ENCODE measurements at regions of chr14 and their contacts with region 1.

Region 1: DNA sequence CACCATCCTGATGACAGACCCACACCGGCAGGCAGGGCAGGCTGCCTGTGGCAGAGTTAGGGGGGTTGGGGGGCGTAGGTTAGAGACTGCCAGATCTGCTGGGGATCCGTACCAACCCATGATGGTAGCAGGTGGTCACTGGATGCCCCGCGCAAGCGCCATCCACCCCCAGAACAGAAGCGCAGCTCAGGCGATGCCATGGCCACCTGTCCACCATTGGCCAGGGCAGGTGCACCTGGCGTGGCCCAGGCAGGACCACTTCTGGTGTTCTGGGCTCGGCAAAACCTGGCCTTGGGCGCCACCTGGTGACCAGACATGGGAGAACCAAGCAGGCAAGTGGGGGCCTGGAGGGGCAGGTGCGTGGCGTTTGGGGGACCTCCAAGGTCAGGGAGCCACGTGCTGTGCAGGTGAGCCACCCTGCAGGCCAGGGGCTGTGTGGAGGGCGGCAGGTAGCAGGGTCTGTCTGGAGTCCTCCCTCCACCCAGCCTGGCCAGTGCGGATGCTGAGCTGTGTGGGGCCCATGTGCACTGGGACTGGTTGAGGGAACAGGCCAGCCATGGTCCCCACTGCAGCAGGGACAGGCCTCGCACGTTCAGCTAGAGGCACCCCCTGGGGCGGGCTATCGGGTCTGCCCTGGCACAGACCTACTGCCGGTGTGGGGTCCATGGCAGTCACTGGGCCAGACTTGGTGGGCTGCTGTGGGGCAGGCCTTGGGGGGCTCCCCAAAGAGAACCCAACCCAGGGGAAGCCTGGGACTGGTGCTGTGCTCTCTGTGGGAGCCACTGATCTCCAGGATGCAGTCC is 15.6 kb downstream of the BAG5 start:
- DNase-seq: peak; percentile 94
- H3K4me3 ChIP-seq: peak overlapping the region in 1 of 2 experiments; percentile 50; a peak in 1 of 4 replicates
- H3K27ac ChIP-seq: no peak overlapping the region
- H3K4me1 ChIP-seq: peaks cover 7 to 25% of the 10 kb centered on the region in 2 experiments; a peak in 3 of 4 replicates
- H3K27me3 ChIP-seq: no peaks in the 10 kb centered on the region
- CTCF ChIP-seq: peak; percentile 91
- EP300 ChIP-seq: no peak
- RAD21 ChIP-seq: peak; percentile 91

Region 2: GRCh38 chr14:103463149-103463548 is 83.7 kb before region 1 on chr14:
- CTCF ChIA-PET with region 1: no interaction called
- POLR2A ChIA-PET with region 1: no interaction called
- DNase-seq: no peak
- H3K4me3 ChIP-seq: no peak overlapping the region
- H3K27ac ChIP-seq: no peak overlapping the region
- H3K4me1 ChIP-seq: no peaks in the 10 kb centered on the region
- H3K27me3 ChIP-seq: no peaks in the 10 kb centered on the region
- CTCF ChIP-seq: no peak
- EP300 ChIP-seq: no peak
- RAD21 ChIP-seq: no peak

Region 3: DNA sequence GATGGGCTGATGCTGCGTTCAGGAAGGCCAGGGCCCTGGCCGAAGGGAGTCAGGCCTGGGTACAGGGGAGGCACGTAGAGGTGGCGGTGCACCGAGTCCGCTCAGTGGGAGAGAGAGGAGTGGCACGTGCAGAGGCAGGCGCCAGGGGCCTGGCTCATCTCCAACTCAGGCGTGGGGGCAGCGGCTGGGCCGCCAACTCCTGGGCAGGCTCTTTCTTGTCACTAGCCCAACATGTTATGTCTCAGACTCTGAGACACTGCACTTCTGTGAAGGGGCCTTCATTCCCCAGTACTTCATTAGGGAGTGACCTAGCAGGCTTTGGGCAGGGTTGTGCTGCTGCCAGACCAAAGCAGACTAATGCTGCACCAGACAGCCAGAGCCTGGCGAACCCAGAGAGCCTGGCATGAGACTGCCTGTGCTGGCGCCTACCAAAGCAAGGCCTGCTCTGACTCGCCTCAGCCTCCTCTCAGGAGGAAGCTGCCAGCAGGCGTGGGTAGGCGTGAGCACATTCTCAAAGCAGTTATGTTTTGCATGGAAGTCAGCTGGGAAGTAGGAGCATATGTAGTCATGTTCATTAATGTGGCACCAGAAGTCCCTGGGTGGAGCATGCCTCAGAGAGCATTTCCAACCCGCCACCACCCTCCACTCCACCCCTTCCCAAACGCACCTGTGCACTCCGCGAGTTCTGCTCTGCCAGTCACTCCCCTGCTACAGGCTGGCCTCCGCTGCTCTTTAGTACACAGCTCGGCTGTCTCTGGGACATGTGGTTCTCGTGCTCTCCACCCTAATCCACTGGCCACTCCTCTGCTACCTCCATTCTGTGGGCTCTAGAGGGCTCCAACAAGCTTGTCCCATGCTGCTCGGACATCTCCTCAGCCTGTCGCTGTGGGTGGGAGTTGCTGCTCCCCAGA is 33.9 kb before region 1 on chr14:
- CTCF ChIA-PET with region 1: interaction called, 194 read pairs
- POLR2A ChIA-PET with region 1: no interaction called
- DNase-seq: no peak
- H3K4me3 ChIP-seq: no peak overlapping the region
- H3K27ac ChIP-seq: peak overlapping the region in 1 of 2 experiments; percentile 34; a peak in 1 of 4 replicates
- H3K4me1 ChIP-seq: peaks cover 3 to 10% of the 10 kb centered on the region in 2 experiments; a peak in 1 of 4 replicates
- H3K27me3 ChIP-seq: no peaks in the 10 kb centered on the region
- CTCF ChIP-seq: no peak
- EP300 ChIP-seq: no peak
- RAD21 ChIP-seq: no peak

Region 4: DNA sequence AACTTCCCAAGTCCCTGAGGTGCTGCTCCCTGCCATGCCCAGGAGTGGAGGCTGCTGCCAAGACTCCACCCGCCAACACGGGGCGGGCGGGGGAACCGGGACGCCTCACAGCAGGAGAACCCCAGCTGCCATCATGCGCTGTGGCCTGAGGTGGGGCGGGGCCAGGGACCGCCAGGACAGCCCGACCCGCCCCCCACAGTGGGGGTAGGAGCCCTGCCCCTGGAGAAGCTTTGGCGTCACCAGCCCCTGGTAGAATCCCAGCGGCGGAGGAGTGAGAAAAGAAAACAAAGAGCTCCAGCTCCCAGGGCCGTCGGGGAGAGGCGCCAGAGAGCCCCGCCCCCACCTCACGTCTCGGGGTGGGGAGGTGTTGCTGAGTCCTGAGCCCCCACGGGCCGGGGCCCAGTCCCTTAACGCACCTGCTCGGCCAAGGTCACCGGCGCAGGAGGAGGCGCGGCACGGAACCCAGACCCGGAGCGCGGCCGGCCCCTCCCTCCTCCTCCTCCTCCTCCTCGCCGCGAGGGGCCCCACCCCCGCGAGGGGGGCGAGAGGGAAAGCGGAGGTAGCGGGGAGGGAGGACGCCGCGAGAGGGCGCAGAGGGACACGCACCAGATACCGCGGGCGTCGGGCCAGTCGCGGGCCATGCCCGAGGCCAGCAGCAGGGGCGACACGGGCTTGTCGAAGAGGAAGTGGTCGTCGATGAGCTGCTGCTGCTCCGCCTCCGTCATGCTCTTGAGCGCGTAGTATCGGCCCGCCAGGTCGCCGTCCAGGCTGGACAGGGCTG is 26.0 kb before region 1 on chr14:
- CTCF ChIA-PET with region 1: interaction called, 194 read pairs
- POLR2A ChIA-PET with region 1: interaction called, 19 read pairs
- DNase-seq: peak; percentile 92
- H3K4me3 ChIP-seq: peak overlapping the region; percentile 35 to 57; a peak in 3 of 4 replicates
- H3K27ac ChIP-seq: peak overlapping the region in 1 of 2 experiments; percentile 74; a peak in 2 of 4 replicates
- H3K4me1 ChIP-seq: peaks cover 0 to 20% of the 10 kb centered on the region in 2 experiments; a peak in 1 of 4 replicates
- H3K27me3 ChIP-seq: peaks cover 16% of the 10 kb centered on the region
- CTCF ChIP-seq: peak; percentile 41
- EP300 ChIP-seq: no peak
- RAD21 ChIP-seq: peak; percentile 36; the same call in 1 of the 2 replicates

Region 5: GRCh38 chr14:103528587-103529382 is 18.1 kb before region 1 on chr14 and contains the start of gene TRMT61A:
- CTCF ChIA-PET with region 1: interaction called, 14 read pairs
- POLR2A ChIA-PET with region 1: interaction called, 19 read pairs
- DNase-seq: peak; percentile 99
- H3K4me3 ChIP-seq: peak within 1 kb of the TSS; percentile 94 to 99
- H3K27ac ChIP-seq: peak within 1 kb of the TSS; percentile 67 to 80
- H3K4me1 ChIP-seq: peaks cover 9 to 25% of the 10 kb centered on the region in 2 experiments; a peak in 1 of 4 replicates
- H3K27me3 ChIP-seq: no peaks in the 10 kb centered on the region
- CTCF ChIP-seq: no peak
- EP300 ChIP-seq: no peak
- RAD21 ChIP-seq: no peak
- polyA plus RNA-seq, gene TRMT61A: 15.8 and 18.1 TPM in 2 replicates

Region 6: GRCh38 chr14:103562429-103563225 is 15.8 kb after region 1 on chr14 and contains the starts of genes BAG5 and COA8:
- CTCF ChIA-PET with region 1: interaction called, 37 read pairs
- POLR2A ChIA-PET with region 1: interaction called, 3 read pairs
- DNase-seq: peak; percentile 96
- H3K4me3 ChIP-seq: peak within 1 kb of the TSS; percentile 91 to 92
- H3K27ac ChIP-seq: peak within 1 kb of the TSS; percentile 92
- H3K4me1 ChIP-seq: peaks cover 16 to 19% of the 10 kb centered on the region in 2 experiments; a peak in 3 of 4 replicates
- H3K27me3 ChIP-seq: no peaks in the 10 kb centered on the region
- CTCF ChIP-seq: 0 out of 2 replicates have a peak, but pooled peaks have one; percentile 6
- EP300 ChIP-seq: no peak
- RAD21 ChIP-seq: no peak
- polyA plus RNA-seq, gene BAG5: 5.2 and 5.9 TPM in 2 replicates
- polyA plus RNA-seq, gene COA8: 25.2 and 25.4 TPM in 2 replicates

Region 7: DNA sequence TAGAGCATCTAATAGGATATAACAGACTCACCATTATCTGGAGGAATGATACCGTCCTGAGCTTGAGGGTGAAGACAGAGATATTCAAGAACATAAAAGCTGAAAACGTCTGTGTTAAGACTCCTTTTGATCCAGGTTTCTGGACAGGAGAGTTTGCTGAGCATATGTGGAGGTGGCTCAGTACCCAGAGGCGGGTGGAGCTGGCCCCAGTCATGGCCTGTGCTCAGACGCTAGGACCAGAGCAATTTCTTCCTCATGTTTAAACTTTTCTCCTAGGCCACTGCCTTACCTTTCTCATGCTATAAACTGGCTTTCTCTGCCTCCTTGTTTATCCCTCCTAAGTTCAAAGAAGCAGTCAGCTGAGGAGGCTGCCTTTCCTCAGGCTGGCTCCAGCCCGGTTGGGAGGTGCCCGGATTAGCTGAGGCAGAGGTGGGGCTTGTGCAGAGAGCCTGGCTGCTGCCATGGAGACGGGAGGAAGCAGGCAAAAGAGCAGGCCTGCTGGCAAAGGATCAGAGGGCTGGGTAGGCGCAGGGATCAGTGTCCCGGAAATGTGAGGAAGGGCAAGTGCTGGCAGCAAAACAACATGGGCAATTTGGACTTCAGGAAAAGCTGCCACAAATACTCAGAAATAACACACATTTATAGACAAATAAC is 29.6 kb after region 1 on chr14:
- CTCF ChIA-PET with region 1: no interaction called
- POLR2A ChIA-PET with region 1: no interaction called
- DNase-seq: peak; percentile 92
- H3K4me3 ChIP-seq: no peak overlapping the region; a peak in 2 of 4 replicates
- H3K27ac ChIP-seq: peak overlapping the region; percentile 63 to 87
- H3K4me1 ChIP-seq: peaks cover 8 to 12% of the 10 kb centered on the region in 2 experiments; a peak in 3 of 4 replicates
- H3K27me3 ChIP-seq: no peaks in the 10 kb centered on the region
- CTCF ChIP-seq: no peak
- EP300 ChIP-seq: no peak
- RAD21 ChIP-seq: 0 out of 2 replicates have a peak, but pooled peaks have one; percentile 3

Region 8: DNA sequence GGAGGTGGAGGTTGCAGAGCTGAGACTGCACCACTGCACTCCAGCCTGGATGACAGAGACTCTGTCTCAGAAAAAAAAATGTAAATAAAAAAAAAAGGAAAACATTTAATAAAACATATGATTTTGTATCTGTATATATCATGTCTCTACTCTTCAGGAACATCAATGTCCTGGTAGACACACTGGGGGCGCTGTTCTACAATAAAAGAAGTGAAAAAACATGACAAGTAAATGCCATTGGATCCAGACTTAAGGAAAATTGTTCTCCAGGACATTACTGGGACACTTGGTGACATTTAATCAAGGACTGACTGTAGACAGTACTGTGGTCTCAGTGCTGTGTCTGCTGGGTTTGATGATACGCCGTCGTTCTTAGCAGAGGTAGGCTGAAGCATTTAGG is 66.7 kb after region 1 on chr14:
- CTCF ChIA-PET with region 1: no interaction called
- POLR2A ChIA-PET with region 1: no interaction called
- DNase-seq: no peak
- H3K4me3 ChIP-seq: no peak overlapping the region
- H3K27ac ChIP-seq: no peak overlapping the region
- H3K4me1 ChIP-seq: no peaks in the 10 kb centered on the region
- H3K27me3 ChIP-seq: no peaks in the 10 kb centered on the region
- CTCF ChIP-seq: peak; percentile 53
- EP300 ChIP-seq: no peak
- RAD21 ChIP-seq: peak; percentile 62

Region 9: DNA sequence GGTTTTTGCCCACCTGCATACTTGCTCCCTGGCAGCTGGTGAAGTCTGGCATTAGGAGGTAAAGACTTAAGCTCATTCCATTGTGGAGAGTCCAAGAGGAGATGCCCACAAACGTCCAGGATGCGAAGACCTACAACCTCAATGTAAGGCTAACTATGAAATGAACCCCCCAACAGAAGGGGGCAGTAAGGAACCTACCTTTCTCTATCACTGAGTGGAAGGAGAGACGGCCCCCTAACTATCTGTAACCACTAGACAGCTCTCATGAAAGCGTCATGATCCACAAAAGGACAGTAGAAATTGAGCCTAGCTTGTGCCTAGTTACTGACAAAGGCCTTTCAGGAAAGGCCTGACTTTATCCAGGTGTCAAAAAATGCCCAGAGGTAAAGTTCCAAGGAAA is 224.0 kb after region 1 on chr14:
- CTCF ChIA-PET with region 1: no interaction called
- POLR2A ChIA-PET with region 1: no interaction called
- DNase-seq: no peak
- H3K4me3 ChIP-seq: no peak overlapping the region
- H3K27ac ChIP-seq: no peak overlapping the region
- H3K4me1 ChIP-seq: no peaks in the 10 kb centered on the region
- H3K27me3 ChIP-seq: no peaks in the 10 kb centered on the region
- CTCF ChIP-seq: no peak
- EP300 ChIP-seq: no peak
- RAD21 ChIP-seq: no peak